Lower leg skin (tissue), 4 donors: ENCODE measurements at regions of chr9 and their contacts with region 1.

Region 1: DNA sequence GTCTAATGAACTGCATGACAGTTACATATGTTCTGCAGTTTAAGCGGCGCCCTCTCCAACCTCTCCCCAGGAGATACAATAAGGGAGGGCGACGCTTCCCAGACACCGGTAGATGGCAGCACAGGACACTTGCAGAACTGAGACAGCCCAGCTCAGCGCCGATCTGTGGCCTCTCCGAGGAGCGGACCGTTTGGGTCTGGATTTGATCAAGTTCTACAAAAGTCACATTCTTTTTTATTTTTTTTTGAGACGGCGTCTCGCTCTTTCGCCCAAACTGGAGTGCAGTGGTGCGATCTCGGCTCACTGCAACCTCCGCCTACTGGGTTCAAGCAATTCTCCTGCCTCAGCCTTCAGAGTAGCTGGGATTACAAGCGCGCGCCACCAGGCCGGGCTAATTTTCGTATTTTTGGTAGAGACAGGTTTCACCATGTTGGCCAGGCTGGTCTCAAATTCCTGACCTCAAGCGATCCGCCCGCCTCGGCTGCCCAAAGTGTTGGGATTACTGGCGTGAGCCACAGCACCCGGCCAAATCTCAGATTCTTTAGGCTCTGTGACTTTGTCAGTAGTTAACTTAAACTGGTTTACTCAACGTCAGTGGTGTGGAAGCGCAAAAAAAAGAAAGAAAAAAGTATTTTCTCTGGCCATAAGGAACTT is 1.4 kb upstream of the ATOSB start:
- DNase-seq: peak; percentile 92 to 97
- H3K4me3 ChIP-seq: no peak overlapping the region
- CTCF ChIP-seq: peak in 1 of 3 donors; percentile 87
- POLR2A ChIP-seq: no peak

Region 2: GRCh38 chr9:35071814-35072460 is 45.1 kb before region 1 on chr9:
- intact Hi-C with region 1: no loop called
- DNase-seq: peak; percentile 69 to 96
- H3K4me3 ChIP-seq: peak overlapping the region; percentile 99
- CTCF ChIP-seq: no peak
- POLR2A ChIP-seq: no peak

Region 3: DNA sequence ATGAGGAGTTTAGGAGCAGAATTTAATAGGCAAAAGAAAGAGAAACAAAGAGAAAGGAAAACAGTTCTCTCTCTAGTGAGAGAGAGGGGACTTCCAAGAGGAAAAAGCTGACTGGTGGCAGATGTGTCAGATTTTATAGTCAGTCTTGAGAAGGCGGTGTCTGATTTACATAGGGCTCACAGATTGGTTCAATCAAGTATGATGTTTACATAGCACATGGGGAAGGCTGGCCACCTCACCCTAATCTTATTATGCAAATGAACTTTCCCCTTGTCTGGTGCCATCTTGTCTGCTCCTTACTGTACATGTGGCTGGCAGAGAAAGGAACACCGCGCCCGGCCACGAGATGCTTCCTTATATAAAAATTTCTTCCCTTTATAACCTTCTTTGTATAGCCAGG is 69.5 kb after region 1 on chr9:
- intact Hi-C with region 1: no loop called
- DNase-seq: no peak
- H3K4me3 ChIP-seq: no peak overlapping the region
- CTCF ChIP-seq: no peak
- POLR2A ChIP-seq: no peak

Region 4: DNA sequence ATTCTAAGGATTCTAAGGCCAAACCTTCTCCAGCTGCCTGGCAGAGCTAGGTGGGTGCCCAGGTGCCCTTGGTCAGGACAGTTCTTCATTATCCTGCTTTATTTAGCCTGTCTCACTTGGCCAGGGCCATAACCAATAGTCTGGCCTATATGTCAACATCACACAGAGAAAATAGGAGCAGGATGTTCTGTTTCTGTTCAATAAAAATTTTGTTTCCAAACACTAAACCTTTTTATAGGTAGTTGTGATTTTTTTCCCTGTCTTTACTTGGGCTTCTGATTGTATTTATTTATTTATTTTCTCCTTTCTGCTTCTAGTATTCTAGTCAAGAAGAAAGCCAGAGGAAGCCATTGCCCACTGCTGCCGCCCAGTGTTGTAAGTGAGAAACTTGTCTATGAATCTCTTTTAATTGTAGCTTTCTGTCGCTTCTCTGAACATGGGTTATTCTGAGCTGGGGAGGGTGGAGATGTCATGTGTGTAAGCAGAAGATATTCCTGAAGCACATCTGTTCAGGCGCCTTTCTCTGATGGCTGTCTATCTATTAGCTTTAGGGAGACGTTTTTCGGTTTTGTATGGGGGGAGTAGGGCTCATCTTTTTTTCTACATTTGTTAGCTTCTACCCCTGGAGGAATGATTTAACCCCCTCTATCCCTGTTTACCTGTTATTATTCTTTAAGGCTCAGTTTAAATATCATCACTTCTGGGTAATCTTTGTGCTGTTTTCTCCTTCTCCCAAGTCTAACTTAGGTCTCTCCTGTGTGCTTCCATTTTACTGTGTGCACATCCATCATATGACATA is 141.8 kb after region 1 on chr9:
- intact Hi-C with region 1: loop called (anchors 10 kb)
- DNase-seq: peak; percentile 52 to 89
- H3K4me3 ChIP-seq: no peak overlapping the region
- CTCF ChIP-seq: no peak
- POLR2A ChIP-seq: no peak